GM12878 (cell line): ENCODE measurements at regions of chr3 and their contacts with region 1.

Region 1: DNA sequence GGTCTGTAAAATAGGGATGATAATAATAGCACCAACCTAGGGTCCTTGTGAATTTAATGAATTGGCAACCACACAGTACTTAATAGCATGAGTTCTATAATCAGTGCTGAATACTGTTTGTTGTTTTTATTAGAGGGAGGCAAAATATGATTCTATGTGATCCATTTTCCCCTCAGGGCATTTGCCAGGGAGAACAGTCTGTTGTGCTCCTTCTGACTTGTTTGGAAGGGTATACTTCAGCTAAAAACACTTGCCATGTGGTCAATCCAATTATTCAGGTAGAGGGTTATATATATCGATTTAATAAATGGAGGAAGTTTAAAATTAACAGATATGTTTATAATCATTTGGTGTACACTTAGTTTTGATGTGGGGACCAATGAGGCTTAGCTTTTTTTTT is 305.3 kb downstream of the CHST2 start:
- DNase-seq: no peak
- ATAC-seq: no peak
- H3K4me3 ChIP-seq: no peak overlapping the region
- H3K27ac ChIP-seq: no peak overlapping the region
- H3K4me1 ChIP-seq: peaks cover 11% of the 10 kb centered on the region
- H3K27me3 ChIP-seq: no peaks in the 10 kb centered on the region
- CTCF ChIP-seq: no peak
- EP300 ChIP-seq: no peak
- POLR2A ChIP-seq: no peak
- RAD21 ChIP-seq: no peak

Region 2: DNA sequence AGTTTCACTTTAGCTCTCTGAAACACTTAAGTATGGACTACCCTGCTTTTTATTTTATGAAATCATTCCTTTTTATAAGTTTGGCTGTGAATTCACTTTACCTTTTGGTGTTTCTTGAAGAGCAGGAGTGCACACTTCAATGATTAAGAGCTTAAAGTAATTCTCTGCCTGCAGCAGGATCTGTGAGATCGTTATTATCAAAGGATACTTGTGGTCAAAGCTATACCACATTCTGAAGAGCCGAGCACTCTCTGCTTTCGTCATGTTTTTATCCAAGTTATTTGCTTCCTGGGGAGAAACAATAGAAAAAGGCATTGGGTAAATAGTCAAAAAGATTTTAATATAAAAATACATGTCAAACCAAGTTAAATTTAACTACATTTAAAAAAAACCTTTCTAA is 61.6 kb before region 1 on chr3:
- CTCF ChIA-PET with region 1: no interaction called
- POLR2A ChIA-PET with region 1: no interaction called
- RAD21 ChIA-PET with region 1: no interaction called
- SMC1A ChIA-PET with region 1: no interaction called
- in situ Hi-C with region 1: no loop called
- intact Hi-C with region 1: no loop called
- DNase-seq: no peak
- ATAC-seq: peak; percentile 54
- H3K4me3 ChIP-seq: no peak overlapping the region
- H3K27ac ChIP-seq: no peak overlapping the region; the same call in 1 of the 2 replicates
- H3K4me1 ChIP-seq: no peaks in the 10 kb centered on the region
- H3K27me3 ChIP-seq: no peaks in the 10 kb centered on the region
- CTCF ChIP-seq: no peak
- EP300 ChIP-seq: no peak
- POLR2A ChIP-seq: no peak
- RAD21 ChIP-seq: no peak

Region 3: GRCh38 chr3:143910756-143911155 is 485.9 kb after region 1 on chr3:
- CTCF ChIA-PET with region 1: no interaction called
- POLR2A ChIA-PET with region 1: interaction called, 10 read pairs
- RAD21 ChIA-PET with region 1: no interaction called
- SMC1A ChIA-PET with region 1: no interaction called
- in situ Hi-C with region 1: no loop called
- intact Hi-C with region 1: no loop called
- DNase-seq: no peak
- ATAC-seq: no peak
- H3K4me3 ChIP-seq: no peak overlapping the region
- H3K27ac ChIP-seq: no peak overlapping the region
- H3K4me1 ChIP-seq: no peaks in the 10 kb centered on the region
- H3K27me3 ChIP-seq: no peaks in the 10 kb centered on the region
- CTCF ChIP-seq: no peak
- EP300 ChIP-seq: no peak
- POLR2A ChIP-seq: no peak
- RAD21 ChIP-seq: no peak